MCF 10A (cell line): ENCODE measurements at regions of chr9 and their contacts with region 1.

Region 1: GRCh38 chr9:127980706-127981558 is at the start of gene EEIG1:
- DNase-seq: peak; percentile 89
- H3K4me3 Mint-ChIP-seq: peak within 1 kb of the TSS; percentile 89
- H3K27ac Mint-ChIP-seq: peak within 1 kb of the TSS; percentile 71
- H3K4me1 Mint-ChIP-seq: peaks cover 17% of the 10 kb centered on the region
- H3K27me3 Mint-ChIP-seq: no peaks in the 10 kb centered on the region
- CTCF ChIP-seq: no peak
- total RNA-seq, gene EEIG1: 17.5 and 23.9 TPM in 2 replicates

Region 2: DNA sequence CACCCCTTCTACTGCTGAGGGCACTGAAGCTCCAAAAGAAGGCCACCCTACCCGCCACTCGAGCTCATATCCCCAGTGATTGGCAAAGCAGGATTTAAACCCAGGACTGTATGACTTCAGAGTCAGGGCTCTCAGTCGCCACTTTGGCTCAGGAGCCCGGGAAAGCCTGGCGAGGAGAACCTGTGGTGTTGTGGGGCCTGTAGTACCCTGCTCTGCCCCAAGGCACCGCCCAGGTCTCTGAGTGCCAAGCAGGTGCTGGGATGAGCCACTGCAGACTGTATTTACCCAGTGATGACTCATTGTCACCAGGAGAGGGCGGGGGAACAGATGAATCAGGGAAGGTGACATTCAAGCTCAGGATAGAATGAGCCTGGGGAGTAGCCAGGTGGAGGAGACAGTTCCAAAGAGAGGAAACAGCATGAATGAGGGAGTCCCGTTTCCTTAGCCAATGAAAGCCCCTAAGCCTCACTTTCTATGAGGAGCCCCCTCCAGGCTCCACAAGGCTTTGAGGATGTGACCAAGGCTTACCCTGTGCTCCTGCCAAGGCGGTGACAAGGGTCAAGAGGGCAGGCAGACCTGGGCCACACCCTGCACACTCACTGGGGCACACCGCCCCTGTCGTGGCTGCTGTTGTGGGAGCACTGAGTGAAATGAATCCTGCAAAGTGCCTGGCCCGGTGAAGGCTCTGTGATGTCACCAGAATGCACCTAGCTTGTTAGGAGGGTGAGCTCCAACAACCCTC is 25.5 kb before region 1 on chr9:
- CTCF ChIA-PET with region 1: interaction called, 6 read pairs
- POLR2A ChIA-PET with region 1: interaction called, 86 read pairs
- intact Hi-C with region 1: no loop called
- DNase-seq: peak; percentile 81
- H3K4me3 Mint-ChIP-seq: peak overlapping the region; percentile 29
- H3K27ac Mint-ChIP-seq: no peak overlapping the region
- H3K4me1 Mint-ChIP-seq: peaks cover 24% of the 10 kb centered on the region
- H3K27me3 Mint-ChIP-seq: no peaks in the 10 kb centered on the region
- CTCF ChIP-seq: peak; percentile 36

Region 3: GRCh38 chr9:127970401-127971313 is 10.3 kb before region 1 on chr9:
- CTCF ChIA-PET with region 1: interaction called, 3 read pairs
- POLR2A ChIA-PET with region 1: interaction called, 86 read pairs
- intact Hi-C with region 1: loop called (anchors 1 kb)
- DNase-seq: no peak
- H3K4me3 Mint-ChIP-seq: no peak overlapping the region
- H3K27ac Mint-ChIP-seq: peak overlapping the region; percentile 98
- H3K4me1 Mint-ChIP-seq: peaks cover 58% of the 10 kb centered on the region
- H3K27me3 Mint-ChIP-seq: no peaks in the 10 kb centered on the region
- CTCF ChIP-seq: no peak

Region 4: DNA sequence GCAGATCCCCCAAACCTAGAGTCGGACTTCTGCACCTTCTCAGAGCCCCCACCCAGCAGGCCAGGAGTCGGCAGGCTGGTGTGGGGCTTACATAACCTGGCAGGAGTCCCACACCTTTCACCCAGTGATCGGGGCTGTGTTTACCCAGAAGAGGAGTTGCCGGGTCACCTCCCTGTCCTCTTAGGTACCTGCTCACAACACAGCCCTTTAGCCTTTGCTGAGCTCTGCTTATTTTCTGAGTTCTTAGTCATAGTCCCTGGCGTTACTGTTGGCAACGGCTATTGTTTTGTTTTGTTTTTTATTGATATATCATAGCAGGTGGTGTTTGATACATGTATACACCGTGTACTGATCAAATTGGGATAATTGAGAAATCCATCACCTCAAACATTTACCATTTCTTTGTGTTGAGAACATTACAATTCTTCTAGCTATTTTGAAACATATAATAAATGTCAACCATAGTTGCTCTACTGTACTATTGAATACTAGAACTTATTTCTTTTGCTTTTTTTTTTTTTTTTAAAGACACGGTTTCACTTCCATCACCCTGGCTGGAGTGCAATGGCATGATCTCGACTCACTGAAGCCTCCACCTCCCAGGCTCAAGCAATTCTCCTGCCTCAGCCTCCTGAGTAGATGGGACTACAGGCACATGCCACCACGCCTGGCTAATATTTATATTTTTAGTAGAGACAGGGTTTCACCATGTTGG is 10.3 kb after region 1 on chr9:
- CTCF ChIA-PET with region 1: no interaction called
- POLR2A ChIA-PET with region 1: interaction called, 13 read pairs
- intact Hi-C with region 1: no loop called
- DNase-seq: no peak
- H3K4me3 Mint-ChIP-seq: no peak overlapping the region
- H3K27ac Mint-ChIP-seq: no peak overlapping the region
- H3K4me1 Mint-ChIP-seq: peaks cover 9% of the 10 kb centered on the region
- H3K27me3 Mint-ChIP-seq: no peaks in the 10 kb centered on the region
- CTCF ChIP-seq: no peak

Region 5: GRCh38 chr9:128067876-128068613 is 87.1 kb after region 1 on chr9 and contains the start of gene SLC25A25:
- CTCF ChIA-PET with region 1: no interaction called
- POLR2A ChIA-PET with region 1: interaction called, 17 read pairs
- intact Hi-C with region 1: no loop called
- DNase-seq: peak; percentile 99
- H3K4me3 Mint-ChIP-seq: no peak within 1 kb of the TSS
- H3K27ac Mint-ChIP-seq: peak within 1 kb of the TSS; percentile 77
- H3K4me1 Mint-ChIP-seq: peaks cover 30% of the 10 kb centered on the region
- H3K27me3 Mint-ChIP-seq: no peaks in the 10 kb centered on the region
- CTCF ChIP-seq: no peak
- total RNA-seq, gene SLC25A25: 11.1 and 15.5 TPM in 2 replicates